A549 (cell line): ENCODE measurements at regions of chr9 and their contacts with region 1.

Region 1: GRCh38 chr9:34591248-34591916 is 1.9 kb upstream of the CNTFR start:
- DNase-seq: peak; percentile 84 to 91
- ATAC-seq: peak; percentile 84 to 95
- H3K4me3 ChIP-seq: no peak overlapping the region
- H3K27ac ChIP-seq: no peak overlapping the region
- H3K4me1 ChIP-seq: peaks cover 7% of the 10 kb centered on the region; the same call in 2 of the 3 replicates
- CTCF ChIP-seq: peak; percentile 81
- EP300 ChIP-seq: no peak
- POLR2A ChIP-seq: no peak
- RAD21 ChIP-seq: peak; percentile 89 to 94

Region 2: GRCh38 chr9:34127035-34127948 is 464.1 kb before region 1 on chr9:
- CTCF ChIA-PET with region 1: no interaction called
- POLR2A ChIA-PET with region 1: no interaction called
- DNase-seq: no peak
- ATAC-seq: peak; percentile 13 to 24; a peak in 3 of 6 replicates
- H3K4me3 ChIP-seq: peak overlapping the region; percentile 69
- H3K27ac ChIP-seq: peak overlapping the region; percentile 88 to 89
- H3K4me1 ChIP-seq: peaks cover 34% of the 10 kb centered on the region
- CTCF ChIP-seq: no peak
- EP300 ChIP-seq: no peak
- POLR2A ChIP-seq: no peak
- RAD21 ChIP-seq: no peak

Region 3: DNA sequence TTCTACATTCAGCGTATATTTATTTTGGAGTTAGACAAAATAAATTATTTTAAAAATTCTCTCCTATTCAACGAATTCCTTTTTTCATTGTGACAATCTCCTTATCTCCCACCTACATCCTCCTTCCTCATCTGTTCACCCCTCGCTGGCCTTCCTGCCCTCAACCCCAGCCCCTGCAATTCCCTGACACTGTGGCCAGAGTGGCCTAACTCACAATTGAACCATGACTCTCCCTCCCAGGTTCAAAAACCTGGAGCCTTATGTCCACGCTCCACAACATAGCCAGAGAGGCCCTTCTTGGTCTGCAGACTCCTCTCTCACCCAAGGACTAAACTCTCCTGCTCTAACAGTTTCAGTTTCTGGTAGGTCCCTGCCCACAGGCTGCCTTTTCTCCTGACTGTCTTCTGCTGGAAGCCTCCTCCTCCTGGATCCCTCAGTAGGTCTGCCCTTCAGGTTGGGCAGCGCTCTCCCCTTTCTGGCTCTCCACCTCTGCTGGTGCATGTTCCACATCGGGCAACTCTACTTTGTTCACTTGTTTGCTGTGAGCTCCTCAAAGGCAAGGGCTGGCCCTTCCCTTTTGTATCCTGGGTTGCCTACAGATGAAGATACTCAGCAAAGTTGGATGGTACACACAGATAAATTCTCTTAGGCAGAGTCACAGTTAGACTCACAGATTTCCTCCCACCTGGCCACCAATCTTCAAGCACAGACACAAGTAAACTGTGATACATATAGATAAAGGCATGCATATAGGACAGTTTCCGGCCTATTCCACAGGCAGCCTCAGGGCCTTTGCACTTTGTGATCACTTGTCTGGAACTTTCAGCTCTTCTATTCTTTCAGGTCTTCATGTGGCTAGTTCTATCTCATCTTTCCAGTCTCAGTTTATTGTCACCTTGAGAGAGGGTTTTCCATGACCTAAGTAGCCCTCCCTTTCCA is 194.8 kb before region 1 on chr9:
- CTCF ChIA-PET with region 1: interaction called, 14 read pairs
- POLR2A ChIA-PET with region 1: no interaction called
- DNase-seq: no peak
- ATAC-seq: no peak
- H3K4me3 ChIP-seq: no peak overlapping the region
- H3K27ac ChIP-seq: no peak overlapping the region
- H3K4me1 ChIP-seq: no peaks in the 10 kb centered on the region
- CTCF ChIP-seq: no peak
- EP300 ChIP-seq: no peak
- POLR2A ChIP-seq: no peak
- RAD21 ChIP-seq: no peak

Region 4: GRCh38 chr9:34446468-34446891 is 144.9 kb before region 1 on chr9:
- CTCF ChIA-PET with region 1: interaction called, 152 read pairs
- POLR2A ChIA-PET with region 1: no interaction called
- DNase-seq: no peak
- ATAC-seq: no peak
- H3K4me3 ChIP-seq: no peak overlapping the region
- H3K27ac ChIP-seq: no peak overlapping the region
- H3K4me1 ChIP-seq: no peaks in the 10 kb centered on the region
- CTCF ChIP-seq: no peak
- EP300 ChIP-seq: no peak
- POLR2A ChIP-seq: no peak
- RAD21 ChIP-seq: no peak

Region 5: GRCh38 chr9:34500623-34501267 is 90.6 kb before region 1 on chr9:
- CTCF ChIA-PET with region 1: interaction called, 32 read pairs
- POLR2A ChIA-PET with region 1: no interaction called
- DNase-seq: peak; percentile 43 to 73
- ATAC-seq: peak; percentile 62 to 84
- H3K4me3 ChIP-seq: no peak overlapping the region
- H3K27ac ChIP-seq: no peak overlapping the region
- H3K4me1 ChIP-seq: peaks cover 6% of the 10 kb centered on the region; the same call in 1 of the 3 replicates
- CTCF ChIP-seq: peak; percentile 93
- EP300 ChIP-seq: no peak
- POLR2A ChIP-seq: no peak
- RAD21 ChIP-seq: peak; percentile 83 to 85

Region 6: GRCh38 chr9:34546834-34547827 is 44.3 kb before region 1 on chr9:
- CTCF ChIA-PET with region 1: interaction called, 297 read pairs
- POLR2A ChIA-PET with region 1: no interaction called
- DNase-seq: peak; percentile 66 to 78
- ATAC-seq: peak; percentile 83 to 91
- H3K4me3 ChIP-seq: no peak overlapping the region
- H3K27ac ChIP-seq: no peak overlapping the region
- H3K4me1 ChIP-seq: peaks cover 9% of the 10 kb centered on the region; the same call in 1 of the 3 replicates
- CTCF ChIP-seq: peak; percentile 65
- EP300 ChIP-seq: no peak
- POLR2A ChIP-seq: no peak
- RAD21 ChIP-seq: peak; percentile 61 to 72

Region 7: GRCh38 chr9:34603610-34604231 is 12.3 kb after region 1 on chr9:
- CTCF ChIA-PET with region 1: interaction called, 101 read pairs
- POLR2A ChIA-PET with region 1: interaction called, 3 read pairs
- DNase-seq: peak; percentile 71 to 94
- ATAC-seq: peak; percentile 82 to 96
- H3K4me3 ChIP-seq: no peak overlapping the region
- H3K27ac ChIP-seq: no peak overlapping the region
- H3K4me1 ChIP-seq: peaks cover 5% of the 10 kb centered on the region; the same call in 1 of the 3 replicates
- CTCF ChIP-seq: peak; percentile 95
- EP300 ChIP-seq: no peak
- POLR2A ChIP-seq: no peak
- RAD21 ChIP-seq: peak; percentile 88 to 96